ENCODE measurements at regions of chr3 and their contacts with region 1.

Region 1: GRCh38 chr3:187745201-187746058 is at the start of gene BCL6:
- DNase-seq: peak; percentile 89 to 94 (median 92)
- ATAC-seq: peak; percentile 63 to 78 (median 73)
- H3K4me3 ChIP-seq: peak within 1 kb of the TSS; percentile 56 to 80 (median 74)
- H3K27ac ChIP-seq: peak within 1 kb of the TSS; percentile 99
- H3K4me1 ChIP-seq: peaks cover 10 to 31% (median 26%) of the 10 kb centered on the region in 3 donors
- H3K27me3 ChIP-seq: no peaks in the 10 kb centered on the region
- CTCF ChIP-seq: no peak
- total RNA-seq, gene BCL6: 19.0 to 48.1 (median 30.5) TPM

Region 2: DNA sequence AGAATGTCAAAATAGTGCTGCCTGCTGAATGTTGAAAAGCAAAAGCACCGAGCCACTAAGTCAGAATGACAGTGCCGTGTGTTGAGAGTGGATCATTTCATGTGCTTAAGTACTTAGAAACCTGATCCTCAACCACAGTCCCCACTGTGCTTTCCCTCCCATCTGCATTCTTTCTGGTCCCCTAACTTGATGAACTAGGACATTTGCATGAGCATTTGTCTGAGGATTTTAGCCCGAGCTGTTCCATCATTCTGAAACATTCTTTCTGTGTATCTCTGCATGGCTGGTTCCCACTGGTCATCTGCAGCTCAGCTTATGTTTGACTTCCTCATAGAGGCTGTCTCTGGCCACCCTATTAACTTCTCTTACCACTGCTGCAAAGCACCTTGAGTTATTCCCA is 117.3 kb before region 1 on chr3:
- intact Hi-C with region 1: no loop called
- DNase-seq: no peak
- ATAC-seq: no peak
- H3K4me3 ChIP-seq: no peak overlapping the region
- H3K27ac ChIP-seq: no peak overlapping the region
- H3K4me1 ChIP-seq: no peaks in the 10 kb centered on the region
- H3K27me3 ChIP-seq: no peaks in the 10 kb centered on the region
- CTCF ChIP-seq: no peak

Region 3: DNA sequence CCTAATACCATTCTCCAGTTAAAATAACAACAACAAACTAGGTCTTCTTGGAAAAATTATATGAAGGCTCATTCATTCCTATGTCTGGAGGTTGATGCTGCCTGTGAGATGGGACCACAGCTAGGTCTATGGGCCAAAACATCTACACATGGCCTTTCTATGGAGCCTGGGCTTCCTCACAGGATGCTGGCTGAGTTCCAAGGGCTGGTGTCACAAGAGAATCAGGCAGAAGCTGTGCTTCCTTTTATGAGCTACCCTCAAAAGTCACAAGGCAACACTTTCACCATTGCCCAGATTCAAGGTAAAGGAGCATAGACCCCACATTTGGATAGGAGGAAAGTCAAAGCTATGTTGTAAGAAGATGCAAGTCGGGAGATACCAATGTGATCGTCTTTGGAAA is 38.5 kb before region 1 on chr3:
- intact Hi-C with region 1: no loop called
- DNase-seq: no peak
- ATAC-seq: no peak
- H3K4me3 ChIP-seq: no peak overlapping the region
- H3K27ac ChIP-seq: no peak overlapping the region
- H3K4me1 ChIP-seq: no peaks in the 10 kb centered on the region
- H3K27me3 ChIP-seq: no peaks in the 10 kb centered on the region
- CTCF ChIP-seq: no peak

Region 4: DNA sequence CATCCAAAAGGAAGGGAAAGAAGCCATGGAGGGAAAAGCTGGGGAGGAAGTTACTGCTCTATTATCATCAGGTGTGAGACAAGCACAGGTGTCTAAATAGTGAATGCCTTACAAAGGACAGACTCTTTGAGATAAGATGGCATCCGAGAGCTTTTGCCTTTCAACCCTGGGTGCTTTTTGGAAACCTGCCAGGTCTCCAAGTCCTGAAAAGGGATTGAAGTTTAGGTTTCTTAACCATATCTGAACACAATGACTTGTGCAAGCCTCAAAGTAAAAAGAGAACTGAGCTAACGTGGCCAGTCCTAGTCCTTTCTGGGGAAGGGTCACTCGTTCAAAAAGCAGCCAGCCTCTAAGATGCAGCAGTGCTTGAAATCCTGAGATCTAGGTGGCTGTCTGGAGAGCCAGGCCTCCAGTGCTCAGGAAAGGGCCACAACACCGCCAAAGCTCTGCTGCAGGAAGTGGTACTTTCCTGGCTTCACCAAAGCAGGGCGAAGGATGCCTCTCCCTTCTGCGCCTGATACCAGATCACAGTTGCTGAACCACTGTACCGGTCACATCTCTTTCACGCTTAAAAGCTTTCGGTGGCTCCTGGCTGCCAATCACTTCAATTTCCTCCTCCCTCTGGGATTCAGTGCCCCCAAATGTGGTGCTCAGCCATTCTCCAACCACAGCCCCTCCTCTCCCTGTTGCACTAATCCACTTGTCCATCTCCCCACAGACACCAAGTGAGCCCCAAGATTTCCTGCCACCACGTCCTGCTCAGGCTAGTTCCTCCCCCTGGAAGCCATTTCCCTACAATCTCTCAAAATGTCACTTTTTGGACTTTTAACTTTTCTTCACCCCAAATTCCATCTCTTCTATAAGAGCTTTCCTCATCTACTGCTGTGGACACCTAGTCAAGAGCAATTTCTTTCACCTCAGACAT is 304.4 kb after region 1 on chr3:
- intact Hi-C with region 1: loop called in 1 of 3 experiments (anchors 10 kb)
- DNase-seq: no peak
- ATAC-seq: no peak
- H3K4me3 ChIP-seq: no peak overlapping the region
- H3K27ac ChIP-seq: no peak overlapping the region
- H3K4me1 ChIP-seq: peaks cover 0 to 10% (median 3%) of the 10 kb centered on the region in 3 donors
- H3K27me3 ChIP-seq: no peaks in the 10 kb centered on the region
- CTCF ChIP-seq: no peak

Region 5: GRCh38 chr3:188294823-188295487 is 549.5 kb after region 1 on chr3:
- intact Hi-C with region 1: loop called in 1 of 3 experiments (anchors 10 kb)
- DNase-seq: peak in 3 of 6 donors; percentile 59 to 66 (median 59)
- ATAC-seq: peak; percentile 67 to 88 (median 75)
- H3K4me3 ChIP-seq: no peak overlapping the region
- H3K27ac ChIP-seq: peak overlapping the region; percentile 30 to 89 (median 64)
- H3K4me1 ChIP-seq: peaks cover 38 to 52% (median 46%) of the 10 kb centered on the region in 3 donors
- H3K27me3 ChIP-seq: no peaks in the 10 kb centered on the region
- CTCF ChIP-seq: no peak